IMR-90 (cell line): ENCODE measurements at regions of chr5 and their contacts with region 1.

Region 1: GRCh38 chr5:160021831-160022446 is 13.0 kb downstream of the TTC1 start:
- DNase-seq: peak; percentile 78
- ATAC-seq: peak; percentile 89
- H3K4me3 ChIP-seq: no peak overlapping the region
- H3K27ac ChIP-seq: peak overlapping the region; percentile 59; the same call in 1 of the 2 replicates
- H3K4me1 ChIP-seq: peaks cover 11% of the 10 kb centered on the region
- H3K27me3 ChIP-seq: no peaks in the 10 kb centered on the region
- CTCF ChIP-seq: peak; percentile 83
- POLR2A ChIP-seq: 0 out of 2 replicates have a peak, but pooled peaks have one; percentile 32
- RAD21 ChIP-seq: peak; percentile 88

Region 2: GRCh38 chr5:160082614-160083500 is 60.9 kb after region 1 on chr5:
- CTCF ChIA-PET with region 1: interaction called, 4 read pairs
- POLR2A ChIA-PET with region 1: no interaction called
- dilution Hi-C with region 1: no loop called
- in situ Hi-C with region 1: no loop called
- intact Hi-C with region 1: loop called (anchors 1 kb)
- DNase-seq: peak; percentile 81
- ATAC-seq: peak; percentile 83
- H3K4me3 ChIP-seq: no peak overlapping the region; the same call in 1 of the 2 replicates
- H3K27ac ChIP-seq: peak overlapping the region; percentile 89
- H3K4me1 ChIP-seq: peaks cover 12% of the 10 kb centered on the region
- H3K27me3 ChIP-seq: no peaks in the 10 kb centered on the region
- CTCF ChIP-seq: no peak
- POLR2A ChIP-seq: no peak
- RAD21 ChIP-seq: no peak

Region 3: DNA sequence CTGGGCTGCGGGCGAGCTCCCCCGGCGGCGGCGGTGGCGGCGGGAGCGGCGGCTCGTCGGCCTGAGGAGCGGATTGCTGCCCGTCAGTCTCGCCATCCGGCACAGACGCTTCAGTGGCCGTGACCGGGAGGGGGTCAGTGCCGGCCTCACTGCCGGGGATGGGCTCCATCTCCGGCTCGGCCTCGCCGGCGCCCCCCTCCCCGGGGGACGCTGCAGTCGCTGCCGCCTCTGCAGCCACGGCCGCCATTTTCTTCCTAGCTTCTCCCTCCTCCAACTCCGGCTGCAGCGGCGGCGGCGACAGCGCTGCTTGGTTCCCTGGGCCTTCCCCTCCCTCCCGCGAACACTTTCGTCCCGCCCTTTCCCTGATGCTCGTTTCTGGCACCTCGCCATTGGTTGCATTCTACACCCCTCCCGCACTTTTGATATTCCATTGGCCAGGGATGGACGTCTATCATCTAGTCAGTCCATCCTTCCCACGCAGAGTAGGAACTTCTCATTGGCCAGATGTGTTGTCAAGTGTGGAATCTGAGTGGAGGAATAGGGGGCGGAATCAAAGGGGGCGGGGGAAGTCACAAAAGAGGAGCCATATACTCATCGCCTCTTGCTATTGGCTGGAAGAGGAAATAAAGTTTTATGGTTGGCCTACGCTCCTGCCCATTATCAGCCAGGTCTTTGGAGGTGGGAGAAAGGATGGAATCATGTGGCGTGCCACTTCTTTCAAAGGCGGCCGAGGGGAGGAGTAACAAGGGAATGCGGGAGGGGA is 97.4 kb after region 1 on chr5 and contains the start of gene PWWP2A:
- CTCF ChIA-PET with region 1: no interaction called
- POLR2A ChIA-PET with region 1: no interaction called
- dilution Hi-C with region 1: no loop called
- in situ Hi-C with region 1: no loop called
- intact Hi-C with region 1: loop called (anchors 1 kb)
- DNase-seq: peak; percentile 100
- ATAC-seq: peak; percentile 92
- H3K4me3 ChIP-seq: peak within 1 kb of the TSS; percentile 94
- H3K27ac ChIP-seq: peak within 1 kb of the TSS; percentile 87
- H3K4me1 ChIP-seq: no peaks in the 10 kb centered on the region
- H3K27me3 ChIP-seq: no peaks in the 10 kb centered on the region
- CTCF ChIP-seq: 0 out of 2 replicates have a peak, but pooled peaks have one; percentile 9
- POLR2A ChIP-seq: peak; percentile 60; the same call in 1 of the 2 replicates
- RAD21 ChIP-seq: no peak
- total RNA-seq, gene PWWP2A: 12.5 and 14.4 TPM in 2 replicates

Region 4: DNA sequence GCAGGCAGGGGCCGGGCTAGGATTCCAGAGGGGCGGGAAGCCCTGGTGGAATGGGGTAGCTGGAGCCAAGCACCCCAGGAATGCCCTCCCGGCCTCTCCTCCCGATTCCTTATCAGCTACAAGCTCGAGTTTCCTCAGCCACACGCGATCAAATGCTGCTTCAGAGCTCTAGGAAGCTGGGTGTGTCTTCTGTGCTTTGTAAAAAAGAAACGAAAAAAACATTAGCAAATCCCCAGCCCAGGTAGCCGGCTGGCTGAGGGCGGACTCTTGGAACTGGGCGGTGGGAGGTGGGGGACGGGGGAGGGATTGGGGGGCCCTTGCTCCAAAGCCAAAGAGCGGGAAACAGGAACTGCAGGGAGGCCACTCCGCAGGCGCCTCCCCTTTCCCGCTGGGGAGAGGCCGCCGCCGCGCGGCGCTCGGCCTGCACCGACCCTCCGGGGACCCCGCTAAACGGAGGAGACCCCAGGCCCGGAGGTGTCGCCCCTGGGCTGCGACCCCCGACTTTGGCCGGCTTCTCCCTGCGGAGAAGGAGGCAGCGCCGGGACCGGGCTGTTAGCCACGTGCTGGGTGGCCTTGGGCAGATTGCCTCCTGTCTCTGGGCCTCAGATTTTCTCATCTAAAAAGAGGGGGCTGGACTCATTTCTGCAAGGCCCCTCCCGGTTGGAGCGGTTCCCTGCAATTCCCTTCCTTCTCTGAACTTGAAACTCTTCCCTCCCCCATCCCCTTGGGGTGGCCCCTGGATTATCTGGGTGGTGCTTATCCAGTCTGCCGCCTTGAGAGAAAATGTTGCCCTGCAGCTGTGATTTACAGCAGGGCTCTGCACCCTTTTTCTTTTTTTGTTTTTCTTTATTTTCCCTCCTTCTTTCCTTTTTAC is 166.4 kb after region 1 on chr5:
- CTCF ChIA-PET with region 1: no interaction called
- POLR2A ChIA-PET with region 1: no interaction called
- dilution Hi-C with region 1: no loop called
- in situ Hi-C with region 1: no loop called
- intact Hi-C with region 1: no loop called
- DNase-seq: peak; percentile 82
- ATAC-seq: peak; percentile 83
- H3K4me3 ChIP-seq: peak overlapping the region; percentile 22; the same call in 1 of the 2 replicates
- H3K27ac ChIP-seq: peak overlapping the region; percentile 68
- H3K4me1 ChIP-seq: peaks cover 3% of the 10 kb centered on the region
- H3K27me3 ChIP-seq: no peaks in the 10 kb centered on the region
- CTCF ChIP-seq: 0 out of 2 replicates have a peak, but pooled peaks have one; percentile 10
- POLR2A ChIP-seq: no peak
- RAD21 ChIP-seq: no peak

Region 5: DNA sequence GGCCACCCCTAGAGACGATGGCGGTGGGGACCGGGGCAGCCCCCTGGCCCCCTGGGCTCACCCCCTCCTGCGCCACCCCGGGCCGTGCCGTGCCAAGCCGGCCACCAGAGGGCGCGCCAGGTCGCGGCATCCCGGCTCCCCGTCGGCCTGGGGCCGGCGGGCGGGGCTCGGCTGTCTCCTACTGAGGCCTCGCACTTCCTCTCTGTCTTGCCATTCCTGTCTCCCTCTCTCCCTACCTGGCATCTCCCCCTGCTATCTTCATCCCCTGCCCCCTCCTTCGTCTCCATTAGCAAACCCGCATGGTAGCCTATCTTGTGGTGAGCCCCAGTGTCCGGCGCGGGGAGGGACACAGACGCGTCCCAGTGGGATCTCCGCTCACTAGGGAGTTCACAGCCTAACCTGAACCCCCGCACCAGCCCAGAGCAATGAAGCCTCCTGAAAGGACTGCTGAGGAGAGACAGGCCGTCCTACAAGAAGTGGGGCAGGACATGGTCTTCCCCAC is 177.5 kb after region 1 on chr5:
- CTCF ChIA-PET with region 1: interaction called, 8 read pairs
- POLR2A ChIA-PET with region 1: no interaction called
- dilution Hi-C with region 1: no loop called
- in situ Hi-C with region 1: no loop called
- intact Hi-C with region 1: loop called (anchors 2 kb)
- DNase-seq: peak; percentile 23
- ATAC-seq: peak; percentile 98
- H3K4me3 ChIP-seq: no peak overlapping the region
- H3K27ac ChIP-seq: peak overlapping the region; percentile 30; the same call in 1 of the 2 replicates
- H3K4me1 ChIP-seq: peaks cover 12% of the 10 kb centered on the region
- H3K27me3 ChIP-seq: no peaks in the 10 kb centered on the region
- CTCF ChIP-seq: peak; percentile 84
- POLR2A ChIP-seq: 0 out of 2 replicates have a peak, but pooled peaks have one; percentile 20
- RAD21 ChIP-seq: peak; percentile 85

Region 6: DNA sequence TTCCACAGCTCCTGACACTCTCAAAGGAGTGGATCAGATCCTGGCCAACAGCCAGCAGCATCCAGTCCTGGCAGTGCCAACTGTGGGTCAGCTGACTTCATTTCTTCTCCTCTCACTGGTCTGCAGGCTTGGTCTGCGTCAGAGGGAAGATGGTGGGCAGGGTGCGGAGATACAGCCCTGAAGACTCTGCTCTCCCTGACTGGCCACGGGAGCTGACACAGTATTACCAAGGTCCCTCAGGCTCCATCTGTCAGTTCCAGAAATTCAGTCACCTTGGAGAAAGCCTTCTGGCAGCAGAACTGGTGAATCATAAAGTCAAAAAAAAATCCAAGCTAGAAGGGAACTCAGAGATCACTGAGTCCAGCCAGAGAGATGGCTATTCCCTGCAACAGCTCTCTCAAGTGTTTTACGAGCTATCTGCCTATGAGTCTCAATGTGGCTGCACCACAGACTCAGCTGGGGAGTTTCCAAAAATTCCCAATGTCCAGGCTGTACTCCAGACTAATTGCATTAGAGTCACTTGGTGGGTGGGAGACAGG is 320.5 kb after region 1 on chr5:
- CTCF ChIA-PET with region 1: interaction called, 26 read pairs
- POLR2A ChIA-PET with region 1: no interaction called
- dilution Hi-C with region 1: no loop called
- in situ Hi-C with region 1: loop called (anchors 5 kb)
- intact Hi-C with region 1: loop called (anchors 1 kb)
- DNase-seq: peak; percentile 61
- ATAC-seq: no peak
- H3K4me3 ChIP-seq: no peak overlapping the region
- H3K27ac ChIP-seq: no peak overlapping the region
- H3K4me1 ChIP-seq: peaks cover 2% of the 10 kb centered on the region; the same call in 1 of the 2 replicates
- H3K27me3 ChIP-seq: no peaks in the 10 kb centered on the region
- CTCF ChIP-seq: no peak
- POLR2A ChIP-seq: no peak
- RAD21 ChIP-seq: no peak

Region 7: GRCh38 chr5:160390787-160391696 is 369.1 kb after region 1 on chr5:
- CTCF ChIA-PET with region 1: interaction called, 17 read pairs
- POLR2A ChIA-PET with region 1: no interaction called
- dilution Hi-C with region 1: no loop called
- in situ Hi-C with region 1: loop called (anchors 5 kb)
- intact Hi-C with region 1: loop called (anchors 1 kb)
- DNase-seq: peak; percentile 36
- ATAC-seq: no peak; the same call in 1 of the 2 replicates
- H3K4me3 ChIP-seq: no peak overlapping the region
- H3K27ac ChIP-seq: no peak overlapping the region
- H3K4me1 ChIP-seq: no peaks in the 10 kb centered on the region
- H3K27me3 ChIP-seq: no peaks in the 10 kb centered on the region
- CTCF ChIP-seq: peak; percentile 59
- POLR2A ChIP-seq: no peak
- RAD21 ChIP-seq: peak; percentile 69

Region 8: DNA sequence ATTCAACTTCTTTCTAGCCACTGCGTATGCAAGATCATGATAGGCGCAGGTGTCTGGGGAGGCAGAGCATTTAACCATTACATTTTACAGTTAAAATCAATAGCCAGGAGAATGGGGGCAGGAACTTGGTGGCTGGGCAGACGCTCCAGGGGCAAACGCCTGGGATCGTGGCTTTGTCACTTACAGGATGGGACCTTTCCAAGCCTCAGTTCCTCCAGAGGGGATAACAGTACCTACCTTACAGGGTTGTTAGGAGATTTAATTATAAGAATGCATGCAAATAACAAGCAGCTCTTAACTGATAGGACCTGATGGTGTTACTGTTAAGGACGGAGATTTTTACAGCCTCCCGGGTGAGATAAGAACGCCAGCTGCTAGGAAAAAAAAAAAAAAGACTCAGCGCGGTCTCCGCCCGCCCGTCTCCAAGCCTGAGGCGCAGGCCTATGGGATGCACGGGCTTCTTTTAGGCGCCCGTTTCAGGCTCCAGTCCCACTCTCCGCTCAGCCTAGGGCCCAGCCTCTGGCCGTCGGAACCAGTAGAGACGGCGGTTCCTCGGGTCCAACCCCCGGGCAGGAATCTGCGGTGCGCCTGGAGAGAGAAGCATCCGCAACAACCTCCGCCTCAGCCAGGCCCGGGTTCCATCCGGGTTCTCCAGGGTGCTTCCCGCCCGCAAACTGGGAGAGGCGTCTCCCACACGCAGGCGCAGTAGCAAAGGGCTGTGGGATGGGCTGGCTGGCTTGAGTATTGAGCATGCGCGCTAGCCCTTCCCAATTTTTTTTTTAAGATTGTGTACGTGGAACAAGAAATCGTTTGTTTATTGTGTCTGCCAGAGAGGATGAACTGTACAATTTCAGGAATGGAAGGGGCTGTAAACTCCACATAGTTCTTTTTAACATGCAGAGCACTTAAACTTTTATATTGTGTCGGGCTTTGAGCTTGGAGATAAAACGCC is 377.7 kb after region 1 on chr5 and contains the start of gene FAM200C:
- CTCF ChIA-PET with region 1: no interaction called
- POLR2A ChIA-PET with region 1: no interaction called
- dilution Hi-C with region 1: no loop called
- in situ Hi-C with region 1: loop called (anchors 5 kb)
- intact Hi-C with region 1: no loop called
- DNase-seq: peak; percentile 94
- ATAC-seq: peak; percentile 93
- H3K4me3 ChIP-seq: peak within 1 kb of the TSS; percentile 79
- H3K27ac ChIP-seq: peak within 1 kb of the TSS; percentile 94
- H3K4me1 ChIP-seq: no peaks in the 10 kb centered on the region; the same call in 1 of the 2 replicates
- H3K27me3 ChIP-seq: no peaks in the 10 kb centered on the region
- CTCF ChIP-seq: no peak
- POLR2A ChIP-seq: peak; percentile 91
- RAD21 ChIP-seq: no peak
- total RNA-seq, gene FAM200C: 6.3 and 6.7 TPM in 2 replicates